Heart left ventricle (tissue), 16 donors: ENCODE measurements at regions of chr17 and their contacts with region 1.

Region 1: DNA sequence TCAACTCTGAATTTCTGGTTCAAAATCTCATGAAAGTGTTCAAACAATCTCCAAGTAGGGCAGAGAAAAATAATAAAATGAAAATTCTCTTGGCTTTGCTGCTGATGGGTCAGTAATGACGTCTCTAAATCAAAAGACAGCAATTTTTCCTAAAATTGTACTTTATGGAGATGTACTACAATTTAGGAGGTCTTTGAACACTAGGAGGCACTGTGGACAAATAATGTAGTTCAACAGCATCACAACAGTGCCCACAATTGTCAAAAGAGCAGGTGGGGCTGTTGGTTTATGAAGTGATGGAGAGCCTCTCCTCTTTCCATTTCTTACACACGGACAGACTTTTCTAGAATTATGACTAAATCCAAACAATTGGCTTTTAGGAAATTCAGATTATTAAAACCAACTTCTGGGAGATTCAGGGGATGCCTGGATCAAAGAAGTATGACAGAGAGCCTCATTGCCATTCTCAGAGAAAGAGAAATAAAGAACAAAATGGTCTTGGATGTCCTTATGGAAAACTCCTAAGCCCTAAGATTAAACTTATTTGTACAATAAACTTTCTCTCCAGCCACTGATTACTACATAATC is 23.8 kb downstream of the EZH1 start:
- DNase-seq: peak in 1 of 5 donors; percentile 40
- ATAC-seq: peak; percentile 63 to 83 (median 80)
- H3K4me3 ChIP-seq: no peak overlapping the region
- H3K27ac ChIP-seq: no peak overlapping the region
- H3K4me1 ChIP-seq: peaks cover 0 to 3% (median 0%) of the 10 kb centered on the region in 12 donors
- H3K27me3 ChIP-seq: no peaks in the 10 kb centered on the region
- CTCF ChIP-seq: peak; percentile 55 to 81 (median 68)
- POLR2A ChIP-seq: no peak

Region 2: GRCh38 chr17:42760652-42761581 is 39.8 kb after region 1 on chr17 and contains the start of gene RAMP2:
- intact Hi-C with region 1: loop called (anchors 1 to 5 kb)
- DNase-seq: peak in 3 of 5 donors; percentile 58 to 63 (median 60)
- ATAC-seq: peak in 3 of 4 donors; percentile 12 to 56 (median 52)
- H3K4me3 ChIP-seq: peak within 1 kb of the TSS; percentile 44 to 92 (median 70)
- H3K27ac ChIP-seq: peak within 1 kb of the TSS; percentile 78 to 98 (median 90)
- H3K4me1 ChIP-seq: peaks cover 3 to 36% (median 16%) of the 10 kb centered on the region in 12 donors
- H3K27me3 ChIP-seq: peaks cover 0 to 27% (median 2%) of the 10 kb centered on the region in 9 donors
- CTCF ChIP-seq: no peak
- POLR2A ChIP-seq: peak in 1 of 2 donors; percentile 45
- total RNA-seq, gene RAMP2: 31.2 to 58.3 (median 39.7) TPM

Region 3: DNA sequence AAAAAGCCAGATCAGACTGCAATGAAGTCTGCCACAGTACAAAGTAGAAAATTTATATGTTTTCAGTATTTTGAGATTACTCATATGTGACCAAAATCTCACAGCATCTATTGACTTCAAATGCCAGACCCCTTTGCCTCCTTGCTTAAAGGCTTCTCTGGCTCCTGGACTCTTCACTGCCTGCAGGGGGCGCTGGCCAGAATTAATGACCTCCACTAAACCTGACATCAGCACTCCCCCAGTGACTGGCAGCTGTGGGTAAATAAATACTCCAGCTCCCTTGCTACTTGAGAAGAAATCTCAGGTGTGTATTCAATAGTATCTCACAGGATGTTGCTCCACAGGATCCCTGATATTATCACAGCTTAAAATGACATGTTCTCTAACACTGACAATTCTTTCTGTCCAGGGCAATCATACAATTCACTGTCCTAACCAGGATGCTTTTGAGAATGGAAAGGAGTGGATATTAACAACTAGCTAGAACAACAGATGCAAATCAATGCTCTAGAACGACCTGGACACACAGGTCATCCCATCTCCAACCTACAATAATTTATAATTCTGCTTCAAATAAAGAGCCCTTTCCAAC is 99.0 kb after region 1 on chr17:
- intact Hi-C with region 1: loop called in 9 of 10 experiments (anchors 2 to 10 kb)
- DNase-seq: peak; percentile 28 to 67 (median 44)
- ATAC-seq: no peak
- H3K4me3 ChIP-seq: no peak overlapping the region
- H3K27ac ChIP-seq: no peak overlapping the region
- H3K4me1 ChIP-seq: peaks cover 6 to 28% (median 16%) of the 10 kb centered on the region in 12 donors
- H3K27me3 ChIP-seq: no peaks in the 10 kb centered on the region
- CTCF ChIP-seq: peak; percentile 39 to 70 (median 62)
- POLR2A ChIP-seq: no peak

Region 4: DNA sequence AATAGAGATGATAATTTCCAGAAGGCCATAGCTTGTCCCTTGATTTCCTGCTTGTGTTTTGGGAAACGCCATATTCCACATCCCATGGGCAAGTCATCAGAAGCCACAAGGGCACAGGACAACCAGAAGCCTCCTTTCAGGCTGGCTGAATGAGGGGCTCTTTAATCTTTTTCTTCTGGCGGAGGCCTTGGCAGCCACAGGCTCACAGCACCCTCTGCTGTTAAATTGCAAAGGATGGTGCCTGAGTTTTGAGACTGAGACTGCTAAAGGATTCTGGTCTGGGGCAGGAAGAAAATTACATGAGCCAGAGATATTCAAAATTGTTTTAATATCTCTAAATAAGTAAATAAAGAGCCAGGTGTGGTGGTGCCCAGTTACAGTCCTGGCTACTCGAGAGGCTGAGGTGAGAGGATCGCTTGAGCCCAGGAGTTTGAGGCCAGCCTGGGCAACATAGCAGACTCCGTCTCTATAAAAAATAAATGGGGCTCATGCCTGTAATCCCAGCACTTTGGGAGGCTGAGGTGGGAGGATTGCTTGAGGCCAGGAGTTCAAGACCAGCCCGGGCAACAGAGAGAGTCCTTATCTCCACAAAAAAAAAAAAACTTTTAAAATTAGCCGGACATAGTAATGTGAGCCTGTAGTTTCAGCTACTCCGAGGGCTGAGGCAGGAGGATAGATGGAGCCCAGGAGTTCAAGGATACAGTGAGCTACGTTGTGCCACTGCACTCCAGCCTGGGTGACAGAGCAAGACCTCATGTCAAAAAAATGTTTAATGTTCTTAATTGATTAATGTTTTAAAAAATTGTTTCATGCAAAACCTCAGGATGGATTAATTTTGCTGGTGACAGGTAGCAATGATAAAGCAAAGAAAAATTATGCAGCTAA is 216.9 kb after region 1 on chr17:
- intact Hi-C with region 1: loop called in 3 of 10 experiments (anchors 10 kb)
- DNase-seq: peak in 4 of 5 donors; percentile 33 to 38 (median 36)
- ATAC-seq: peak; percentile 58 to 83 (median 74)
- H3K4me3 ChIP-seq: no peak overlapping the region
- H3K27ac ChIP-seq: no peak overlapping the region
- H3K4me1 ChIP-seq: no peaks in the 10 kb centered on the region
- H3K27me3 ChIP-seq: peaks cover 0 to 4% (median 0%) of the 10 kb centered on the region in 9 donors
- CTCF ChIP-seq: peak; percentile 52 to 80 (median 66)
- POLR2A ChIP-seq: no peak

Region 5: GRCh38 chr17:42944211-42944610 is 223.1 kb after region 1 on chr17:
- intact Hi-C with region 1: loop called in 3 of 10 experiments (anchors 10 kb)
- DNase-seq: no peak
- ATAC-seq: no peak
- H3K4me3 ChIP-seq: no peak overlapping the region
- H3K27ac ChIP-seq: no peak overlapping the region
- H3K4me1 ChIP-seq: peaks cover 0 to 8% (median 0%) of the 10 kb centered on the region in 12 donors
- H3K27me3 ChIP-seq: peaks cover 0 to 4% (median 0%) of the 10 kb centered on the region in 9 donors
- CTCF ChIP-seq: no peak
- POLR2A ChIP-seq: no peak